ENCODE measurements at regions of chr12 and their contacts with region 1.

Region 1: GRCh38 chr12:13472690-13473089 is 276.2 kb downstream of the EMP1 start:
- DNase-seq: no peak
- H3K4me3 Mint-ChIP-seq: no peak overlapping the region
- H3K27ac Mint-ChIP-seq: no peak overlapping the region
- H3K4me1 Mint-ChIP-seq: peaks cover 11% of the 10 kb centered on the region
- H3K27me3 Mint-ChIP-seq: peaks cover 17% of the 10 kb centered on the region

Region 2: GRCh38 chr12:12992418-12993130 is 480.1 kb before region 1 on chr12:
- intact Hi-C with region 1: no loop called
- DNase-seq: no peak
- H3K4me3 Mint-ChIP-seq: no peak overlapping the region
- H3K27ac Mint-ChIP-seq: no peak overlapping the region
- H3K4me1 Mint-ChIP-seq: peaks cover 11% of the 10 kb centered on the region
- H3K27me3 Mint-ChIP-seq: no peaks in the 10 kb centered on the region

Region 3: DNA sequence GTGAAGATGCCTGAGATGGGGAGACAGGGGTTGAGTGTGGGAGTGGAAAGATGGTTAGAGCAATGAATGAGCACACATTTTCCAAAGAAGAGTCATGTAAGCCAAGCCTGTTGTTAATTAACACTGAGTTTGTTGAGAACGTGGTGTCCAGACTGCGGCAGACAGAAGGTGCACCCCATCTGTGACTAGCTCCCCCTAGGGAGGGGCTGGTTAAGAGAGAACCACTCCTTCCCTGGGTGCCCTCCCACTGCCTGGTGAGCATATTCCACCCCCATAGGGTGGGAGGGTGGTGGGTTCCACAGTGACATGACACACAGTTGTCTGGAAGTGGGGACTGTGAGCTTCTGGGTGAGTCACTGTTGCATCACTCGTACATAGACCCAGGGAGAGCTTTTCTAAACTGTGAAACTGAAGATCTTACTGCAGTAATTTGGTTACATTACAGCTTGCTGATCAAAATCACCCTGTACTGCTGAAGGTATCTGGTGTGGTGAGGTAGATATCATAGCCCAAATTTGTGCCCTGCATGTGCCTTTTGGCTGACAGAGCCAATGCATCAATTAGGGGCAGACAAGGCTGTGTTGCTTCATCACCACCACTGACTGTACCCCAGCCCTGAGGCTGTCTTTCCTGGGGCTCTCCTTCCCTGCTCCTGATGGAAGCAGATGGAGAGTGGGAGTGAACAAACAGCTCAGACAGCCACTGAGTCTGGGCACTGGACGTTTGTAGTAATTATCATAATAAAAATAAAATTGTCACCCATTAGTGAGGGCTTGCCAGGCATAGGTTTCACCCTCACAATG is 125.2 kb before region 1 on chr12:
- intact Hi-C with region 1: loop called (anchors 10 kb)
- DNase-seq: no peak
- H3K4me3 Mint-ChIP-seq: no peak overlapping the region
- H3K27ac Mint-ChIP-seq: no peak overlapping the region
- H3K4me1 Mint-ChIP-seq: peaks cover 13% of the 10 kb centered on the region
- H3K27me3 Mint-ChIP-seq: peaks cover 43% of the 10 kb centered on the region

Region 4: GRCh38 chr12:13425766-13426165 is 46.9 kb before region 1 on chr12:
- intact Hi-C with region 1: no loop called
- DNase-seq: no peak
- H3K4me3 Mint-ChIP-seq: no peak overlapping the region
- H3K27ac Mint-ChIP-seq: no peak overlapping the region
- H3K4me1 Mint-ChIP-seq: no peaks in the 10 kb centered on the region
- H3K27me3 Mint-ChIP-seq: no peaks in the 10 kb centered on the region

Region 5: DNA sequence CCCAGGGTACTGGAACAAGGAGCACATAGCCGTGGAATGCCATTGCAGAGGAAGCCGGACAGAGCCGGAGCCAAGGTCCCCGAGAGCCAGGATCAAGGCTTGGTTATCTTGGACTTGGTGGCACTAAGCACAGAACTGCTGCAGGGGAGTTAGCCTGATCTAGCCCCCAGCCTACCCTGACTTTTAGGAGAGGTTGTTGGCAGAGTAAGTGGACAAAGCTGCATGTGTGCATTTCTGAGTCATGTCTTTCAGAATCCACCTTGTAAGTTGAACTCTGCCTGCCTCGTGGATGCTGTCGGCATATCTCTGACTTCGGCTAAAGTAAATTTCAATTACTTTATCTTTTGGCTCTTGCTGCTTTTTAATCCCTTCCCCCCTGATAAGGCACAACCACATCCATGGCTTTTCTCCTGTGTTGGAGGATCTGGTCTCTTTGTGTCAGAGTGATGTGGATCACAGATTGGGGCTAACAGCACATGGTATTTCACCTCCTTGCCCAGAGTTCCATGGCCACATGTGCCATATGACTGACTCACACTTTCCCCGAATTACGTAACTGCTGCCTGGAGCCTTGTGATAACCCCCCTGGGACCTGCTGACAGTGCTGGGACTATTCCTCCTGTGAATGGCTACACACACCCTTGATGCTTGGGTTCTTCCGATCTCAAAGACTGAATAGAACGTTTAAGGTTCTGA is 35.8 kb before region 1 on chr12:
- intact Hi-C with region 1: no loop called
- DNase-seq: no peak
- H3K4me3 Mint-ChIP-seq: no peak overlapping the region
- H3K27ac Mint-ChIP-seq: no peak overlapping the region
- H3K4me1 Mint-ChIP-seq: no peaks in the 10 kb centered on the region
- H3K27me3 Mint-ChIP-seq: peaks cover 1% of the 10 kb centered on the region

Region 6: GRCh38 chr12:13504074-13504473 is 31.4 kb after region 1 on chr12:
- intact Hi-C with region 1: no loop called
- DNase-seq: no peak
- H3K4me3 Mint-ChIP-seq: no peak overlapping the region
- H3K27ac Mint-ChIP-seq: no peak overlapping the region
- H3K4me1 Mint-ChIP-seq: no peaks in the 10 kb centered on the region
- H3K27me3 Mint-ChIP-seq: no peaks in the 10 kb centered on the region

Measured in activated T-helper 2 cell treated with anti-CD3 and anti-CD28 coated beads, Interferon-gamma antibody, Interleukin-2, Interleukin-4, amounts not matched to agents 10 μg/mL and 5 μg/mL and 100 μg/mL, durations not matched to agents 14 hours and 24 hours and 36 hours (primary cell).